Common myeloid progenitor, CD34-positive (primary cell): ENCODE measurements at regions of chr2 and their contacts with region 1.

Region 1: GRCh38 chr2:218395797-218396687 is 3.6 kb upstream of the CTDSP1 start:
- DNase-seq: peak; percentile 98 to 99 (median 99)
- H3K4me3 ChIP-seq: peak overlapping the region; percentile 46 to 88 (median 85)
- H3K27ac ChIP-seq: peak overlapping the region; percentile 90 to 94
- H3K4me1 ChIP-seq: peaks cover 2 to 65% (median 60%) of the 10 kb centered on the region in 4 experiments
- H3K27me3 ChIP-seq: no peaks in the 10 kb centered on the region

Region 2: GRCh38 chr2:218286570-218287459 is 109.2 kb before region 1 on chr2:
- CTCF ChIA-PET with region 1: interaction called, 64 read pairs
- POLR2A ChIA-PET with region 1: interaction called, 29 read pairs
- DNase-seq: peak; percentile 88 to 94 (median 92)
- H3K4me3 ChIP-seq: peak overlapping the region in 6 of 7 experiments; percentile 2 to 68 (median 53)
- H3K27ac ChIP-seq: peak overlapping the region; percentile 89 to 91
- H3K4me1 ChIP-seq: peaks cover 26 to 77% (median 71%) of the 10 kb centered on the region in 4 experiments
- H3K27me3 ChIP-seq: no peaks in the 10 kb centered on the region

Region 3: DNA sequence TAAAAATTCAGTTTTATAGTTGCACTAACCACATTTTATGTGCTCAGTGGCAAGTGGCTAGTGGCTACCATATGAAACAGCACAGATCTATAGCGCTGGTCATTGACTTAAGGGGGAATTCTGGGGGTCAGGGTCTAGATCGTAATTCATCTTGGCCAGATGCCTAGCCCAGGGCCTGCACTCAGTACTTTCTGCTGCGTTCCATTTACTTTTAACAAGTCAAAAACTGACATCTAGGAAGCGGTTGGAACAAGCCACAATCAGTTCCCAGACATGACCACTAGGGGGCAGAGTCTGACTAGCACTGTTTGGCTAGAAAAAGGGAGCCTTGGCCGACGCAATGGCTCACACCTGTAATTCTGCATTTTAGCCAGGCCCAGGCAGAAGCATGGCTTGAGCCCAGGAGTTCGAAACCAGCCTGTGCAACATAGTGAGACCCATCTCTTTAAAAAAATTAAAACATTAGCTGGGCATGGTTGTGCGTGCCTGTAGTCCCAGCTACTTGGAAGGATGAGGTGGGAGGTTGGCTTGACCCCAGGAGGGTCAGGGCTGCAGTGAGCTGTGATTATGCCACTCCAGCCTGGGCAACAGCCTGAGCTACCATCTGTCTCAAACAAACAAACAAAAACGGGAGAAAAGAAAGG is 94.7 kb before region 1 on chr2:
- CTCF ChIA-PET with region 1: interaction called, 17 read pairs
- POLR2A ChIA-PET with region 1: interaction called, 4 read pairs
- DNase-seq: peak; percentile 91 to 96 (median 93)
- H3K4me3 ChIP-seq: no peak overlapping the region
- H3K27ac ChIP-seq: peak overlapping the region in 1 of 2 experiments; percentile 65
- H3K4me1 ChIP-seq: peaks cover 0 to 10% (median 3%) of the 10 kb centered on the region in 4 experiments
- H3K27me3 ChIP-seq: no peaks in the 10 kb centered on the region

Region 4: GRCh38 chr2:218367415-218368153 is 28.5 kb before region 1 on chr2:
- CTCF ChIA-PET with region 1: interaction called, 14 read pairs
- POLR2A ChIA-PET with region 1: interaction called, 37 read pairs
- DNase-seq: peak; percentile 87 to 95 (median 92)
- H3K4me3 ChIP-seq: peak overlapping the region; percentile 45 to 84 (median 63)
- H3K27ac ChIP-seq: peak overlapping the region; percentile 81 to 93
- H3K4me1 ChIP-seq: peaks cover 14 to 48% (median 28%) of the 10 kb centered on the region in 4 experiments
- H3K27me3 ChIP-seq: no peaks in the 10 kb centered on the region

Region 5: GRCh38 chr2:218406209-218406948 is 10.3 kb after region 1 on chr2:
- CTCF ChIA-PET with region 1: interaction called, 9 read pairs
- POLR2A ChIA-PET with region 1: interaction called, 15 read pairs
- DNase-seq: peak; percentile 93 to 97 (median 95)
- H3K4me3 ChIP-seq: peak overlapping the region; percentile 21 to 77 (median 59)
- H3K27ac ChIP-seq: peak overlapping the region; percentile 33 to 70
- H3K4me1 ChIP-seq: peaks cover 5 to 62% (median 55%) of the 10 kb centered on the region in 4 experiments
- H3K27me3 ChIP-seq: no peaks in the 10 kb centered on the region

Region 6: DNA sequence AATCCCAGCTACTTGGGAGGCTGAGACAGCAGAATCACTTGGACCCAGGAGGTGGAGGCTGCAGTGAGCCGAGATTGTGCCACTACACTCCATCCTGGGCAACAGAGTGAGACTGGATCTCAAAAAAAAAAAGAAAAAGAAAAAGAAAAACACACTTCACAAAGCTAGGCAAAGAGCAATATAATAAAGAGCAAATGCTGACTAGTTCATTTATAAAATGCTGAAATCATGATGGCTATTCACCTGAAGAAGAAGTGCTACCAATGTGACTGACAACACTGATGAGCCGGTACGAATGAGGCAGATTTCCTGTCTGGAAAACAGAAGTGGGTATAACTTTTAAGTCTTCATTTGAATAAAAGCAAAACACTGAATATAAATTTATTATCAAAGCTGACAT is 60.8 kb after region 1 on chr2:
- CTCF ChIA-PET with region 1: no interaction called
- POLR2A ChIA-PET with region 1: no interaction called
- DNase-seq: no peak
- H3K4me3 ChIP-seq: no peak overlapping the region
- H3K27ac ChIP-seq: no peak overlapping the region
- H3K4me1 ChIP-seq: no peaks in the 10 kb centered on the region
- H3K27me3 ChIP-seq: no peaks in the 10 kb centered on the region